HEK293 (cell line): ENCODE measurements at regions of chr10 and their contacts with region 1.

Region 1: DNA sequence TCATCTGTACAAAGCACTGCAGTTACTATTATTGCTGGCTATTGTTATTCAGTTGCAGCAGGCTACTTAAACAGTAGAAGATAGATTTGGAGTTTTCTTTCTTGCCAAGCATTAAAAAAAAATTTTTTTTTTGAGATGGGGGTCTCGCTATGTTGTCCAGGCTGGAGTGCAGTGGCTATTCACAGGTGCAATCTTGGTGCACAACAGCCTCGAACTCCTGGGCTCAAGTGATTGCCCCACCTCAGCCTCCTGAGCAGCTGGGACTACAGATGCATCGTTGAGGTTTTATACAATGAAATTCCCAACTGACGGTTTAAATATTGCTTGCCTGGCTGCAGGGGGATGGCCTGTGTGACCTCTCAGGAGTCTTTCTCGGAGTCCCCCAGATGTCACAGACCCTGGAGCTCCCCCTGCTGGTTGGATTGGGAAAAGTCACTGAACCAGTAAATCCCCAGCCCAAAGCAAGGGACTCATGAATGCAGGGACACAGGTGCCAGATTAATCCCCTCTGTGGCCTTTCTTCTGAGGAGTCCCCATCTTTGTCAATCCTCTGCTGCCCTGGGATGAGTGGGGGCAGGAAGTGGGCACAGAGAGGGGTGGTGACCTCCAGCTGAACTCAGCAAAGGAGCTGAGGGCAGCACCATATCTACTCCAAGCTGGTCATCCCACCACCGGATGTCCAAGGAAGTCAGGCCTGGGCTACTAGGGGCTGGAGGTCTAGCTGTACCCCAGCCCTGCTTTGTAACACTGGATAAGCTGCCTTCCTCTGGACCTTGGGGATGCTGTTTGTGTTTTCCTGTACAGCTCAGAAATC is 149.6 kb downstream of the C10orf105 start:
- H3K4me3 ChIP-seq: no peak overlapping the region
- H3K27ac ChIP-seq: no peak overlapping the region
- H3K4me1 ChIP-seq: no peaks in the 10 kb centered on the region
- CTCF ChIP-seq: peak; percentile 75

Region 2: DNA sequence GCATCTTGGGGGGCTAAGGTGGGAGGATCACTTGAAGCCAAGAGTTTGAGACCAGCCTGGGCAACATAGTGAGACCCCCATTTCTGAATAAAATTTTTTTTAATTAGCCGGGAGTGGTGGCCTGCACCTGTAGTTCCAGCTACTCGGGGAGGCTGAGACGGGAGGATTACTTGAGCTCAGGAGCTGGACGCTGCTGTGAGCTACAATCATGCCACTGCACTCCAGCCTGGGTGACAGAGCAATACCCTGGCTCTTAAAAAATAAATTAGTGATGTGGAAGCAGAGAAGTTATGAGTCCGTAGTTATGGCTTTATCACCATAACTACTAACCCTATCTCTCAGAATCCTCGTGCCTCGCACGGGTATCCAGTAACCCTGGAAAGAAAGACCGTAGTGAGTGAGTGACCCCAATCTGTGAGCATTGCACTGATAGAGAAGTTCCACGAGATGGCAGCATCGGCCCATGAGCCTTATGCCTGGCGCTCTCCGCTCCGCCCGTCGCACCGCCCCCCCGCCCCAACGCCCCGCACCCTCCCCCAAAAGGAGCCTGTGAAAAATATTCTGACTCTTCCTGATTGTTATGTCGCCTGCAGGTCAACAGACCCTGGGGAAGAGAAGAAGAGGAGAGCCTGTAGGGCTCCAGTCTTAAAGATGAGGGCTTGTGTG is 255.8 kb before region 1 on chr10:
- CTCF ChIA-PET with region 1: interaction called, 30 read pairs
- POLR2A ChIA-PET with region 1: no interaction called
- H3K4me3 ChIP-seq: no peak overlapping the region
- H3K27ac ChIP-seq: no peak overlapping the region
- H3K4me1 ChIP-seq: no peaks in the 10 kb centered on the region
- CTCF ChIP-seq: peak; percentile 54

Region 3: GRCh38 chr10:71383972-71384687 is 185.9 kb before region 1 on chr10:
- CTCF ChIA-PET with region 1: interaction called, 86 read pairs
- POLR2A ChIA-PET with region 1: no interaction called
- H3K4me3 ChIP-seq: no peak overlapping the region
- H3K27ac ChIP-seq: no peak overlapping the region
- H3K4me1 ChIP-seq: no peaks in the 10 kb centered on the region
- CTCF ChIP-seq: peak; percentile 83

Region 4: DNA sequence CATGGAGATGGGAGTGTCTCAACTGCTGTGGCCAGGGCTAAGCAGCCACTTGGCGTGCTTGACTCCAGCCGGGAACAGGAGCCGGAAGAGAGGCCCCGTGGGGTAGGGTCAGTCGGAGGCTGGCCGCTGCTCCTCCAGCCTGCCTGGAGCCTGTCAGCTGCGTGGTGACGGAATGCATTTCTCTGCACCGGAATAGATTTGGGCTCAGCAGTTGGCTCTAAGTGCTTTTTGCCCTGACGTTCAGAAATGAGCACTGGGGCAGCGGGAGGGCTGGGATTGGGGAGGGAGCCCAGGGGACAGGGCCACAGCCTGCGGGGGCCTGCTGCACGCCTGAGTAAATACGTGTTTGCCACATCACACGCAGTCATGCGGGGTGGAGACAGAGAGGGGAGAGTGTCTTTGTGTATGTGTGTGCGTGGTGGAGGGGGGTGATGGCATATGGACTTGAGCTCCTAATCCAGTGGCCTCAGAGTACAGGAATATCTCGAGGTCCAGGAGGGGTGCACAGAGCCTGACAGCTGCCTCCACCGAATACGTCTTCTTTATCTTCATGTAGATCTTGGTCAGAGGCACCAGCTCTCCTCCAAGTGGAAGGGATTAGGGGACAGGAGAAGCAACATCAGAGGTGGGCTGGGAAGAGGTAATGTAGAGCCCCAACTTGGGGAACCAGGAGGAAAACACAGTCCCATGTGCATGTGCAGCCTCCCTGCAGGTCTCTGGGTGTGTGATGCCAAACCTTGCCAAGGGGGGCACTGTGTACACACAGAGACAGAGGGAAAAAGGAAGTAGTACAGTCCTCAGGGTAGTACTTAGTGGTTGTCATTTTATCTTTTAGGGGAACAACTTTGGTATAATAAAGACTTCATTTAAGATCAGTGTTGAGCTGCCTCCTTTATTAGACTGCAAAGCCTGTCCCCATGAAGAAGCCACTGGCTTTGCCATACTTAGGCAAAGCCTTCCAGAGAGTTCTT is 21.8 kb before region 1 on chr10:
- CTCF ChIA-PET with region 1: interaction called, 23 read pairs
- POLR2A ChIA-PET with region 1: no interaction called
- H3K4me3 ChIP-seq: no peak overlapping the region
- H3K27ac ChIP-seq: no peak overlapping the region
- H3K4me1 ChIP-seq: no peaks in the 10 kb centered on the region
- CTCF ChIP-seq: no peak

Region 5: DNA sequence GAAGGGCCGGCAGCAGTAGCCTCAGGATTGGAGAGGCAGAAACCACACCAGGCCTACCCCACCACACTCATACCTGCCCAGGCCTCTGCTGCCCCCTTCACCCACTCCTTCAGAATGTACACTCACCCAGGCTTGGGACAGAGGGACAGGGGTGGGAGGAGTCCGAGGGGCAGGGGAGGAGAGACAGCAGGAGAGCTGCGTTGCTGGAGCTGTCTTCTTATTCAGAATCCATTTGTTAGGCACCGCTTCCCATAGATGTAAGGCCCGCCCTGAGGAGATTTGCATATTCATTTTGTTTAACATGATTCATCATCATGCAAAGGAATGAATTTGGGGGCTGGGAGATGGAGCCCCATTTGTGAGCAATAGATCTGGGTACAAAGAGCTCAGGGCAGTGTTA is 16.6 kb before region 1 on chr10:
- CTCF ChIA-PET with region 1: interaction called, 23 read pairs
- POLR2A ChIA-PET with region 1: no interaction called
- H3K4me3 ChIP-seq: no peak overlapping the region
- H3K27ac ChIP-seq: no peak overlapping the region
- H3K4me1 ChIP-seq: no peaks in the 10 kb centered on the region
- CTCF ChIP-seq: no peak

Region 6: DNA sequence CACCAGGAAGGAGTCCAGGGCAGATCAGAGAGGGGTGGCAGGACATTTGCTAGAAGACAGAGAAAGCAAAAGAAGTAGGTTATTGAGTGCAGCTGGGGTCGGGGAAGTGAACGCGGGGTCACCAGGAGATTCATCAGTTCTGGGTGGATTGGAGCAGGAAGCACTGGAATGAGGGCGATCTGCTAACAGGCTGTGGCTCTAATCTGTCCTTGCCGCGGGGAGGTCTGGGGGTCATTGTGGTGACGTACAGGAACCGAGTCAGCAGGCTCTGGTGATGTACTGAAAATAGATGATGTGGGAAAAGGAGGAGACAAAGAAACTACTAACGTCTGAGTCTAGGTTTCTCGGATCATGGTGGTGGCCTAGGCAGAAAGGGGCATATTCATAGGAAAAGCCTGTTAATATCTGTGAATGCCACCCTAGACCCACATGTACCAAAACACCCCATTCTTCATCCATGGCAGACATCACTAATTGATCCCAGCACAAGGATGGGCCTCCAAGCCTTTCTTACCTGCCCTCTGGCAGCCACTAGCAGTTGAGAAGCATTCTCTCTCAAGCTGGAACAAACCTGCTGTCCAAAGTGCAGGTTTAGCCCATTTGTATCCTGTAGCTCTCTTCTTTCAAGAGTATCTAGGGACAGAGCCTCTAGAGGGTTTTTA is 15.1 kb after region 1 on chr10:
- CTCF ChIA-PET with region 1: interaction called, 15 read pairs
- POLR2A ChIA-PET with region 1: no interaction called
- H3K4me3 ChIP-seq: no peak overlapping the region
- H3K27ac ChIP-seq: no peak overlapping the region
- H3K4me1 ChIP-seq: no peaks in the 10 kb centered on the region
- CTCF ChIP-seq: no peak

Region 7: GRCh38 chr10:71590781-71591350 is 20.9 kb after region 1 on chr10:
- CTCF ChIA-PET with region 1: interaction called, 10 read pairs
- POLR2A ChIA-PET with region 1: no interaction called
- H3K4me3 ChIP-seq: no peak overlapping the region
- H3K27ac ChIP-seq: no peak overlapping the region
- H3K4me1 ChIP-seq: 0 out of 2 replicates have a peak, but pooled peaks cover 3% of the 10 kb centered on the region
- CTCF ChIP-seq: no peak